ENCODE measurements at regions of chr12 and their contacts with region 1.

Region 1: GRCh38 chr12:80269803-80270552 is 170.6 kb downstream of the OTOGL start:
- ATAC-seq: peak in 4 of 8 experiments; percentile 37 to 65 (median 48)
- H3K4me3 ChIP-seq: no peak overlapping the region
- H3K27ac ChIP-seq: no peak overlapping the region
- H3K4me1 ChIP-seq: peaks cover 0 to 3% of the 10 kb centered on the region in 2 donors

Region 2: GRCh38 chr12:80195074-80195726 is 74.8 kb before region 1 on chr12:
- in situ Hi-C with region 1: loop called in 2 of 9 experiments (anchors 10 kb)
- ATAC-seq: peak in 4 of 8 experiments; percentile 59 to 78 (median 68)
- H3K4me3 ChIP-seq: no peak overlapping the region
- H3K27ac ChIP-seq: no peak overlapping the region
- H3K4me1 ChIP-seq: peaks cover 0 to 5% of the 10 kb centered on the region in 2 donors

Region 3: GRCh38 chr12:80200408-80200807 is 69.6 kb before region 1 on chr12:
- in situ Hi-C with region 1: loop called in 2 of 9 experiments (anchors 10 kb)
- ATAC-seq: no peak
- H3K4me3 ChIP-seq: no peak overlapping the region
- H3K27ac ChIP-seq: no peak overlapping the region
- H3K4me1 ChIP-seq: peaks cover 6 to 9% of the 10 kb centered on the region in 2 donors

Region 4: DNA sequence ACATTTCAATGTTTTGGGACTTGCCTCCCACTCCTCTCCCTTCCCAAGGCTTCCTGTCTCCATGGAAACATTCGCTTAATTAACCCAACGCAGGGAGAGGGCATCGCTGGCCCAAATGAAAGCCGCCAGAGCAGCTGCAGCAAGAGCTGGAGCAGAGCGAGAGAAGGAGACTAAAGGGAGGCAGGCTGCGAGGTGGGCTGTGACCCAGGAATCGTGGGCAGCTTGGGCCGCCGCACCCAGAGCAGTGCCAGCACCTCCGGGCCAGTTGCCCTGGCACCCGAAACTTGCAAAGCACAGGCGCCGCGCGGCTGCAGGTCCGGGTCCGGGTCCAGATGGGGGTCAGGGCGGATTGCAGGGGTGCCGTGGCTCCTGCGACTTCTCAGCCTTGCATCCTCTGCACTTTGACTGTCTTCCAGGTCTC is 130.6 kb after region 1 on chr12:
- in situ Hi-C with region 1: no loop called
- ATAC-seq: no peak
- H3K4me3 ChIP-seq: no peak overlapping the region
- H3K27ac ChIP-seq: no peak overlapping the region
- H3K4me1 ChIP-seq: no peaks in the 10 kb centered on the region

Measured in motor neuron (in vitro differentiated cells).